Dorsolateral prefrontal cortex (tissue), 120 donors: ENCODE measurements at regions of chr15 and their contacts with region 1.

Region 1: GRCh38 chr15:71443538-71443937 is 328.3 kb downstream of the THSD4 start:
- DNase-seq: peak in 9 of 10 donors; percentile 30 to 67 (median 50)
- H3K4me3 ChIP-seq: no peak overlapping the region
- H3K27ac ChIP-seq: no peak overlapping the region
- H3K27me3 ChIP-seq: no peaks in the 10 kb centered on the region
- CTCF ChIP-seq: peak; percentile 71 to 91 (median 82)

Region 2: GRCh38 chr15:70892002-70892914 is 551.3 kb before region 1 on chr15 and contains the starts of genes LRRC49 and THAP10:
- intact Hi-C with region 1: loop called (anchors 5 kb)
- DNase-seq: peak; percentile 75 to 95 (median 90)
- H3K4me3 ChIP-seq: peak within 1 kb of the TSS; percentile 58 to 98 (median 86)
- H3K27ac ChIP-seq: peak within 1 kb of the TSS; percentile 51 to 95 (median 89)
- H3K27me3 ChIP-seq: no peaks in the 10 kb centered on the region
- CTCF ChIP-seq: peak in 6 of 56 donors; percentile 7 to 21 (median 8)
- total RNA-seq, gene LRRC49: 28.2 to 72.1 (median 48.6) TPM
- total RNA-seq, gene THAP10: 3.3 to 18.7 (median 10.3) TPM

Region 3: GRCh38 chr15:71109130-71109529 is 334.4 kb before region 1 on chr15:
- intact Hi-C with region 1: loop called (anchors 5 kb)
- DNase-seq: no peak
- H3K4me3 ChIP-seq: no peak overlapping the region
- H3K27ac ChIP-seq: no peak overlapping the region
- H3K27me3 ChIP-seq: peaks cover 0 to 6% (median 0%) of the 10 kb centered on the region in 45 donors
- CTCF ChIP-seq: peak in 3 of 56 donors; percentile 10 to 13 (median 12)

Region 4: DNA sequence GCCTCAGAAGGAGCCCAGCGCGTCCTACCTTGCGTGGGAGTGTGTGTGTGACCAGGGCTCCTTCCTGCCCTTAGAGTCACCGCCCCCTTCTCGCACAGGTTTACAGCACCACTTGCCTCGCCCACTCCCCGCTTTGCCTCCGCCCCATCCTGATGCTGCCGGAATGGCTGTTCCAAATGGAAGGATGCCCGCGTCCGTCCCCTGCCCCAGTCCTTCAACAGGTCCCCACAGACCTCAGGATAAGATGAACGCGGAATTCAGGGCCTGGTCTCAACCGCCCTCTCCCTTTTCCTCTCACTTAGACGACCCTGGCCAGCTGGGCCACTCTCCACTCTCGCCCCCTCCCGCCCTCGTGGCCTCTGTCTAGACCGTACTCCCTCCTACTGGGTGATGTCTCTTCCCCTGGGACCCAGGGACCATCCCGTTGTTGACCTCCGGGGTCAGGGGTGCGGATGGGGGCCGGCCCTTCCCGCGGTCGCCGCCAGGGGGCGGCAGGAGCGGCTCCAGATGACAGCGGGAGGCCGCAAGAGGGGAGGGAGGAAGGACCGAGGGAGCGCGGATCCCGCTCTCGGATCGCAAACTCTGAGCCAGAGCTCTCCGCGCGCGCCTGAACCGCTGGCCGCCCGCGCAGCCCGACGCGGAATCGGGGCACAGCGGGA is 328.5 kb before region 1 on chr15 and contains the start of gene THSD4:
- intact Hi-C with region 1: loop called in 1 of 2 experiments (anchors 5 kb)
- DNase-seq: peak in 4 of 10 donors; percentile 12 to 66 (median 20)
- H3K4me3 ChIP-seq: peak within 1 kb of the TSS; percentile 2 to 68 (median 50)
- H3K27ac ChIP-seq: peak within 1 kb of the TSS in 22 of 59 donors; percentile 7 to 71 (median 49)
- H3K27me3 ChIP-seq: peaks cover 0 to 26% (median 0%) of the 10 kb centered on the region in 45 donors
- CTCF ChIP-seq: peak; percentile 57 to 92 (median 78)
- total RNA-seq, gene THSD4: 3.9 to 32.6 (median 9.1) TPM